Naive thymus-derived CD4-positive, alpha-beta T cell (primary cell): ENCODE measurements at regions of chr14 and their contacts with region 1.

Region 1: GRCh38 chr14:58107947-58108552 is 44.0 kb downstream of the ARMH4 start:
- DNase-seq: peak in 7 of 9 donors; percentile 23 to 55 (median 29)
- ATAC-seq: peak; percentile 45
- H3K4me3 ChIP-seq: no peak overlapping the region
- H3K4me3 Mint-ChIP-seq: no peak overlapping the region
- H3K27ac ChIP-seq: no peak overlapping the region
- H3K27ac Mint-ChIP-seq: no peak overlapping the region
- H3K4me1 ChIP-seq: no peaks in the 10 kb centered on the region
- H3K4me1 Mint-ChIP-seq: no peaks in the 10 kb centered on the region
- H3K27me3 ChIP-seq: peaks cover 0 to 2% of the 10 kb centered on the region in 2 donors
- H3K27me3 Mint-ChIP-seq: peaks cover 4 to 44% (median 15%) of the 10 kb centered on the region in 5 donors

Region 2: GRCh38 chr14:58048219-58048618 is 59.8 kb before region 1 on chr14:
- CTCF ChIA-PET with region 1: no interaction called
- POLR2A ChIA-PET with region 1: no interaction called
- intact Hi-C with region 1: no loop called
- DNase-seq: no peak
- ATAC-seq: no peak
- H3K4me3 ChIP-seq: no peak overlapping the region
- H3K4me3 Mint-ChIP-seq: no peak overlapping the region
- H3K27ac ChIP-seq: no peak overlapping the region
- H3K27ac Mint-ChIP-seq: no peak overlapping the region
- H3K4me1 ChIP-seq: no peaks in the 10 kb centered on the region
- H3K4me1 Mint-ChIP-seq: no peaks in the 10 kb centered on the region
- H3K27me3 ChIP-seq: no peaks in the 10 kb centered on the region
- H3K27me3 Mint-ChIP-seq: peaks cover 0 to 16% (median 13%) of the 10 kb centered on the region in 5 donors

Region 3: DNA sequence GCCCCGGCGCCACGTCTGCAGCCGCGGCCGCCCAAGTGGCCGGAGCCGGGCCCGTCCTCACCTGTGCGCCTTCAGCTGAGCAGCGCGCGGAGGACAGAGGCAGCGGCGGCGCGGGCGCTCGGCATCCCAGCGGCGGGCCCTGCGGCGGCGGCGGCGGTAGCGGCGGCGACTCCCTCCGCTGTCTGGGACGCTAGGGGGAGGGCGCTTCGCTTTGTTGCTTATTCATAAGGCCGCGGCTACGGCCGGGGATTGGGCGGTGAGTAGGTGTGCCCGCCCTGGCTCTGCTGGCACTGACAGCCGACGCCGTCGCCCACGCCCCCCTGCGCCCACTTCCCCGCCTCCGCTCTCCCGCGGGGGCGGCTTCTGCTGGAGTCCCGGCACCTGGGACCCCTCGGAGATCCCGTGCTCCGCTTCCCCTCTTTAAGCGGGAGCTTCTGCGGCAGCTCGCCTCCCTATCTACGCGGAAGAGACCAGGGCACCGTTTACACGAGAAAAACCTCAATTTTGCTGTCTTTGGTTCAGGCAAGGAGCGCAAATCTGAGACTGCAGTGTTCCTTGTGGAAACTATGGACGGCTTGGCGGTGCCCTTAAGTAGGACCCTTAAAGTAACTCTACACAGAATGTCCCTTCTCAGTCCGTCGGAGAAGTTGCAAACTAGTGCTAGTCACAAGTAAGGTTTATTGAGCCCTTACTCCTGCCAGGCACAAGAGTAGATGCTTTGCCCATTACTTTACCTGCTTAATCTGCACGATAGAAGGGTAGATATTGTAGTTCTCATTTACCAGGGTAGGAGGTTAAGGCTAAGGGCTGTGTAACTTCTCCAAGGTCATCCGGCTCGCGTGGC is 44.2 kb after region 1 on chr14 and contains the start of gene ARMH4:
- CTCF ChIA-PET with region 1: no interaction called
- POLR2A ChIA-PET with region 1: no interaction called
- intact Hi-C with region 1: loop called in 1 of 2 experiments (anchors 5 kb)
- DNase-seq: peak; percentile 28 to 66 (median 54)
- ATAC-seq: peak; percentile 94
- H3K4me3 ChIP-seq: peak within 1 kb of the TSS; percentile 71
- H3K4me3 Mint-ChIP-seq: peak within 1 kb of the TSS; percentile 75 to 86 (median 80)
- H3K27ac ChIP-seq: no peak within 1 kb of the TSS
- H3K27ac Mint-ChIP-seq: no peak within 1 kb of the TSS
- H3K4me1 ChIP-seq: peaks cover 7 to 8% of the 10 kb centered on the region in 2 donors
- H3K4me1 Mint-ChIP-seq: peaks cover 9 to 21% (median 13%) of the 10 kb centered on the region in 7 donors
- H3K27me3 ChIP-seq: peaks cover 0 to 4% of the 10 kb centered on the region in 2 donors
- H3K27me3 Mint-ChIP-seq: peaks cover 56 to 73% (median 68%) of the 10 kb centered on the region in 5 donors
- total RNA-seq, gene ARMH4: not detected

Region 4: GRCh38 chr14:58331111-58331510 is 223.1 kb after region 1 on chr14:
- CTCF ChIA-PET with region 1: no interaction called
- POLR2A ChIA-PET with region 1: no interaction called
- intact Hi-C with region 1: loop called in 1 of 2 experiments (anchors 1 kb)
- DNase-seq: peak; percentile 61 to 98 (median 95)
- ATAC-seq: peak; percentile 97
- H3K4me3 ChIP-seq: peak overlapping the region; percentile 17
- H3K4me3 Mint-ChIP-seq: peak overlapping the region; percentile 38 to 85 (median 76)
- H3K27ac ChIP-seq: peak overlapping the region; percentile 72
- H3K27ac Mint-ChIP-seq: peak overlapping the region; percentile 84 to 97 (median 94)
- H3K4me1 ChIP-seq: peaks cover 5 to 9% of the 10 kb centered on the region in 2 donors
- H3K4me1 Mint-ChIP-seq: peaks cover 17 to 42% (median 32%) of the 10 kb centered on the region in 7 donors
- H3K27me3 ChIP-seq: no peaks in the 10 kb centered on the region
- H3K27me3 Mint-ChIP-seq: no peaks in the 10 kb centered on the region

Region 5: GRCh38 chr14:58395812-58396788 is 288.1 kb after region 1 on chr14 and contains the start of gene TOMM20L:
- CTCF ChIA-PET with region 1: interaction called, 3 read pairs
- POLR2A ChIA-PET with region 1: no interaction called
- intact Hi-C with region 1: loop called (anchors 1 to 2 kb)
- DNase-seq: peak; percentile 54 to 84 (median 72)
- ATAC-seq: peak; percentile 92
- H3K4me3 ChIP-seq: peak within 1 kb of the TSS; percentile 33
- H3K4me3 Mint-ChIP-seq: peak within 1 kb of the TSS; percentile 78 to 93 (median 86)
- H3K27ac ChIP-seq: peak within 1 kb of the TSS; percentile 72
- H3K27ac Mint-ChIP-seq: peak within 1 kb of the TSS; percentile 66 to 97 (median 95)
- H3K4me1 ChIP-seq: peaks cover 8 to 9% of the 10 kb centered on the region in 2 donors
- H3K4me1 Mint-ChIP-seq: peaks cover 6 to 19% (median 12%) of the 10 kb centered on the region in 7 donors
- H3K27me3 ChIP-seq: no peaks in the 10 kb centered on the region
- H3K27me3 Mint-ChIP-seq: peaks cover 0 to 2% (median 0%) of the 10 kb centered on the region in 5 donors
- total RNA-seq, gene TOMM20L: not detected

Region 6: DNA sequence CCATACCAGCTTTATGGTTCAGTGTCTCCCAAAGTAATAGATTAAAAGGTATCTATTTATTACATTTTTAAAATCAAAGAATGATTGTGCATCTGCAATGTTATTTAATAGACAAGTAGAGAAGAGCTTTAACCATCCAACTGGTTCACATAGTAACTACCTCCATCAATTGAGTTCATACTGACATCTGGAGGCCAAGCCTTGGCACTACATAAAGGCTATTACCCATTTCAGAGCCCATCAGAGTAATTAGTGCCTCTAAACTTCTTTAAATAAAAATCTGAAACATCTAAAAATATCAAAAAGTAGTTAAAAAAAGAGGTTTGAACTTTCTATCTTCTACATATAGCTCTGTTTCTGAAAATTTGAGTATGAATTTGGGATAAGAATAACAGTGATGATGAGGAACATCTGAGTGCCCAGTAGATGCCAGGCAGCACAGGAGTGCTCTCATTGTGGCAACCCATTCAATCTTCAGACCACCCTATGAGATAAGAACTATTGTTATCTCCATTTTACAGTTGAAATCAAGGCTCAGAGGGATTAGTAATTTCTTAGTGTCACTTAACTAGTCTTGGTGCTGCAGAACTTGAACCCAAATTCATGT is 947.5 kb after region 1 on chr14:
- CTCF ChIA-PET with region 1: no interaction called
- POLR2A ChIA-PET with region 1: no interaction called
- intact Hi-C with region 1: loop called (anchors 1 to 10 kb)
- DNase-seq: peak in 7 of 9 donors; percentile 10 to 60 (median 36)
- ATAC-seq: peak; percentile 83
- H3K4me3 ChIP-seq: no peak overlapping the region
- H3K4me3 Mint-ChIP-seq: no peak overlapping the region
- H3K27ac ChIP-seq: no peak overlapping the region
- H3K27ac Mint-ChIP-seq: no peak overlapping the region
- H3K4me1 ChIP-seq: no peaks in the 10 kb centered on the region
- H3K4me1 Mint-ChIP-seq: no peaks in the 10 kb centered on the region
- H3K27me3 ChIP-seq: no peaks in the 10 kb centered on the region
- H3K27me3 Mint-ChIP-seq: peaks cover 0 to 11% (median 5%) of the 10 kb centered on the region in 5 donors